Body of pancreas (tissue), 4 donors: ENCODE measurements at regions of chr4 and their contacts with region 1.

Region 1: GRCh38 chr4:174362340-174362739 is 78.6 kb downstream of the CEP44 start:
- DNase-seq: no peak
- ATAC-seq: no peak
- H3K4me3 ChIP-seq: no peak overlapping the region
- H3K27ac ChIP-seq: no peak overlapping the region
- H3K4me1 ChIP-seq: no peaks in the 10 kb centered on the region
- H3K27me3 ChIP-seq: peaks cover 0 to 3% of the 10 kb centered on the region in 2 donors
- CTCF ChIP-seq: no peak
- POLR2A ChIP-seq: no peak

Region 2: GRCh38 chr4:174604198-174604597 is 241.9 kb after region 1 on chr4:
- intact Hi-C with region 1: no loop called
- DNase-seq: peak in 1 of 4 donors; percentile 29
- ATAC-seq: peak; percentile 71
- H3K4me3 ChIP-seq: no peak overlapping the region
- H3K27ac ChIP-seq: no peak overlapping the region
- H3K4me1 ChIP-seq: no peaks in the 10 kb centered on the region
- H3K27me3 ChIP-seq: no peaks in the 10 kb centered on the region
- CTCF ChIP-seq: no peak
- POLR2A ChIP-seq: no peak

Region 3: DNA sequence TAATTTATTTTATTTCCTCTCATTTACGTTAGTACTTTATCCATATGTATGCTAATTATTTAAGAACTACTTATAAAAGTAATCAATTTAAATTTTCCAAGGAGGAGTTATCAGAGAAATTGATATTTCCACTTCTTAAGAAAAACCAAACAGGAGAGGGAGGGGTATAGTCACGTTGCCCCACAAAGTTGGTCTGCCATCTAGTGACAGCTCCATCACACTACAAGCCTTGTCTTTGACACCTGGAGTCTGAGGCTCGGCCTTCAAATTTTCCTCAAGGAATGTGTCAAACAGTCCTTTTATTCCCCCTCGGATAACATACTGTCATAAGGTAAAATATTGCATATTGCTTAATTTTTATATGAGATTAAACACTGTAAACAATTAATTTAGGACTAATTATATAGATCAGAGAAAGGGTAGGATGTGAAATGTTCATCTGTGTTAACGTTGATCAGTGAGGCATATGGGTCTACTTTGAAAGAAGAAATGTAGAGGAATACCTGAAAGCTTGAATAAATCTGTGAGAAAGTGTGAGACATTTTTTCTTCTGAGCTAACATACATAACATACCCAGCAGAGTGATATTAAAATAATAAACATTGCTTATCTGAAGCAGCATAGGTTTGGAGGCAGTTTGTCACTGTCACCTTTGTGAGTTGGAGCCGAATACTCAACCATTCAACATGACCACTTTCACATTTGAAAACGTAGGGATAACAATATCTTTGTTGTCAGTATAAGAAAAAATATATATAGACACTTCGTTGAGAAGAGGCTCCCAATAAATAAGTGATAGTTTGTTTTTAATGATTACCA is 352.3 kb after region 1 on chr4:
- intact Hi-C with region 1: loop called (anchors 5 kb)
- DNase-seq: peak; percentile 15 to 41 (median 28)
- ATAC-seq: peak; percentile 78
- H3K4me3 ChIP-seq: no peak overlapping the region
- H3K27ac ChIP-seq: no peak overlapping the region
- H3K4me1 ChIP-seq: no peaks in the 10 kb centered on the region
- H3K27me3 ChIP-seq: no peaks in the 10 kb centered on the region
- CTCF ChIP-seq: peak in 6 of 7 experiments; percentile 48 to 61 (median 52)
- POLR2A ChIP-seq: no peak

Region 4: GRCh38 chr4:175234177-175234576 is 871.8 kb after region 1 on chr4:
- intact Hi-C with region 1: no loop called
- DNase-seq: no peak
- ATAC-seq: no peak
- H3K4me3 ChIP-seq: no peak overlapping the region
- H3K27ac ChIP-seq: no peak overlapping the region
- H3K4me1 ChIP-seq: no peaks in the 10 kb centered on the region
- H3K27me3 ChIP-seq: no peaks in the 10 kb centered on the region
- CTCF ChIP-seq: no peak
- POLR2A ChIP-seq: no peak